Endothelial cell of umbilical vein (primary cell): ENCODE measurements at regions of chr10 and their contacts with region 1.

Region 1: DNA sequence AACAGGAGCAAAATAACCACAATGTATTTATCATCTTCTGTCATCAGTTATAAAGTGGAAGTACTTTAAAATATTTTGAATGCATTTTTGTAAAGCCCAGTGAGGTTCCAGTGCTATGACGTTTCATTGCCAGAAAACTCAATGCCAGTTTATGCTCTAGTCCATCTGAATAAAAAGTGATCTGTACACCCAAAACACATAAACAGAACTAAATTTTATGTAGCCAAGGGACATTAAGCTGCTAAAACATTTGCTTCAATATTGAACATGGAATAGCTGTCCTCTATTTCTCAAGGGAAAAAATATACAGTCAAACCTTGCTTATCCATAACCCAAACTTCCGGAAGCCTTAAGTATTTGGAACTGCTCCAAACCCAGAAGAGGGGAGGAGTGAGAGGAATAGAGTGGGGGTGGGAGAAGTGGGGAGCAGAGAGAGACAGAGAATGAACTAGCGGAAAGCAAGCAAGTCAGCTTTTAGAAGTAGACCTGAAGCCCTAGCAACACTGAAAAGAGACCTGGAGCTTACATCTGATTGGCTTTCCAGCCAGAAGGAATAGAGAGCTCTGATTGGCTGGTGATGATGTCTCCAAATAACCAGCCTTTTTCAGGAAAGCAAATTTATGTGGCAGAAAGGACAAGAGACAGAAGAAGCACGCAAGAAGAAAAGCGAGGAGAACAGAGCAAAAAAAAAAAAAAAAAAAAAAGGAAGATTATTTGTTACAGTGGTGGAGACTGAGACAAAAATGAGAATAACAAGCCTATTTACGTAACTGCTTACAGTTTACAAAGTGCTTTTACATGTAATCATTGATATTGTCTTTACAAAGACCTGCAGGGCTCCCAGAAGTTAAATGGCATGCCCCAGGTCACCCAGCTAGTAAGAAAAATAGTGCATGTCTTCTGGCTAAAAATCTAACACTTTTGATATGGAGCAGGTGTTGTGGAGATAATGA is 196.0 kb downstream of the RNLS start:
- DNase-seq: peak; percentile 88
- H3K4me3 ChIP-seq: peak overlapping the region in 1 of 3 experiments; percentile 12
- H3K27ac ChIP-seq: no peak overlapping the region
- H3K4me1 ChIP-seq: peaks cover 6% of the 10 kb centered on the region
- H3K27me3 ChIP-seq: no peaks in the 10 kb centered on the region
- CTCF ChIP-seq: no peak
- POLR2A ChIP-seq: no peak

Region 2: GRCh38 chr10:87817609-87818504 is 569.2 kb before region 1 on chr10 and contains the start of gene ATAD1:
- CTCF ChIA-PET with region 1: interaction called, 6 read pairs
- POLR2A ChIA-PET with region 1: no interaction called
- dilution Hi-C with region 1: no loop called
- intact Hi-C with region 1: loop called (anchors 1 kb)
- DNase-seq: peak; percentile 80
- H3K4me3 ChIP-seq: peak within 1 kb of the TSS; percentile 61 to 88 (median 78)
- H3K27ac ChIP-seq: peak within 1 kb of the TSS; percentile 68
- H3K4me1 ChIP-seq: peaks cover 22% of the 10 kb centered on the region
- H3K27me3 ChIP-seq: no peaks in the 10 kb centered on the region
- CTCF ChIP-seq: peak in 1 of 2 donors; percentile 5
- POLR2A ChIP-seq: peak; percentile 77
- total RNA-seq, gene ATAD1: 23.6 and 25.8 TPM in 2 replicates

Region 3: GRCh38 chr10:87915989-87916388 is 471.1 kb before region 1 on chr10:
- CTCF ChIA-PET with region 1: interaction called, 10 read pairs
- POLR2A ChIA-PET with region 1: no interaction called
- dilution Hi-C with region 1: no loop called
- intact Hi-C with region 1: loop called (anchors 5 kb)
- DNase-seq: peak; percentile 94
- H3K4me3 ChIP-seq: peak overlapping the region in 1 of 3 experiments; percentile 5
- H3K27ac ChIP-seq: peak overlapping the region; percentile 68
- H3K4me1 ChIP-seq: peaks cover 57% of the 10 kb centered on the region
- H3K27me3 ChIP-seq: no peaks in the 10 kb centered on the region
- CTCF ChIP-seq: no peak
- POLR2A ChIP-seq: no peak

Region 4: DNA sequence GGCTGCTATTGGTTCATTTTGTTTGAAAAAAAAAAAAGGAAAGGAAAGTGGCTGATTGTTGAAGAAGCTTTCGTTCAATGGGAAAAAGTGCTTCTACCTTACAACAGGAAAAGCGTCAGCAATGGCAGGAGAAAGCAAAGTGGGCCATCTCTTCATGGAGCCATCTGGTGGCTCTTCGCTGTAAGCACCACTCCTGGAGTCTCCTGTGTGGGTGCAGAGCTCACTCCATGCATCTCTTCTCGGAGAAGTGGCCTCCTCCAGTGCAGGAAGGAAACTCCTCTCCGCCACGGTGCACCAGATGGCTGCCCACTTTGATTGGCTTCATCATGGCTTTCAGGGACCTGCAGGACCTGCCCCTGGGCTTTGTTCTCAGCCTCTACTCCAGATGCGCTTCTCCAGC is 272.7 kb before region 1 on chr10:
- CTCF ChIA-PET with region 1: interaction called, 42 read pairs
- POLR2A ChIA-PET with region 1: no interaction called
- dilution Hi-C with region 1: no loop called
- intact Hi-C with region 1: loop called (anchors 1 kb)
- DNase-seq: peak; percentile 51
- H3K4me3 ChIP-seq: no peak overlapping the region
- H3K27ac ChIP-seq: no peak overlapping the region
- H3K4me1 ChIP-seq: no peaks in the 10 kb centered on the region
- H3K27me3 ChIP-seq: no peaks in the 10 kb centered on the region
- CTCF ChIP-seq: peak; percentile 42 to 71
- POLR2A ChIP-seq: no peak

Region 5: GRCh38 chr10:88401671-88402347 is 14.7 kb after region 1 on chr10:
- CTCF ChIA-PET with region 1: interaction called, 35 read pairs
- POLR2A ChIA-PET with region 1: no interaction called
- dilution Hi-C with region 1: no loop called
- intact Hi-C with region 1: no loop called
- DNase-seq: peak; percentile 16
- H3K4me3 ChIP-seq: no peak overlapping the region
- H3K27ac ChIP-seq: no peak overlapping the region
- H3K4me1 ChIP-seq: no peaks in the 10 kb centered on the region
- H3K27me3 ChIP-seq: no peaks in the 10 kb centered on the region
- CTCF ChIP-seq: peak in 1 of 2 donors; percentile 17
- POLR2A ChIP-seq: no peak

Region 6: DNA sequence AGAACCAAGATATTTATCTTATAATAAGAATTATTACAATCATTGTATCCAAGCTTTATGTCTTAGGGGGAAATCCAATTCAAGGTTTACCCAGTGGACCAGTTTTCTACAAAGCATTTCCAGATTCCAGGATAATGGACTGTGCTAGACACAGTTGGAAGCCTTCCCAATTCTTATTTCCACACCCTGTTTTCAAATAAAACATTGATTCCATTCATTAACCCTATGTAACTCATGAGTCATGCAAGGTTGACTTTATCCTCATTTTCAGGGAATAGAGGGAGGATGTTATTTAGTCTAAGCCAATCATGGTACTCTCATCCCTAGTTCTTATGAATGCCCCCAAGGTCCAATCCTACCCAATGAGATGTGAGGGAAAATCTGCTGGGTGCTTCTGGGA is 50.3 kb after region 1 on chr10:
- CTCF ChIA-PET with region 1: no interaction called
- POLR2A ChIA-PET with region 1: no interaction called
- dilution Hi-C with region 1: no loop called
- intact Hi-C with region 1: no loop called
- DNase-seq: no peak
- H3K4me3 ChIP-seq: no peak overlapping the region
- H3K27ac ChIP-seq: no peak overlapping the region
- H3K4me1 ChIP-seq: no peaks in the 10 kb centered on the region
- H3K27me3 ChIP-seq: no peaks in the 10 kb centered on the region
- CTCF ChIP-seq: no peak
- POLR2A ChIP-seq: no peak

Region 7: DNA sequence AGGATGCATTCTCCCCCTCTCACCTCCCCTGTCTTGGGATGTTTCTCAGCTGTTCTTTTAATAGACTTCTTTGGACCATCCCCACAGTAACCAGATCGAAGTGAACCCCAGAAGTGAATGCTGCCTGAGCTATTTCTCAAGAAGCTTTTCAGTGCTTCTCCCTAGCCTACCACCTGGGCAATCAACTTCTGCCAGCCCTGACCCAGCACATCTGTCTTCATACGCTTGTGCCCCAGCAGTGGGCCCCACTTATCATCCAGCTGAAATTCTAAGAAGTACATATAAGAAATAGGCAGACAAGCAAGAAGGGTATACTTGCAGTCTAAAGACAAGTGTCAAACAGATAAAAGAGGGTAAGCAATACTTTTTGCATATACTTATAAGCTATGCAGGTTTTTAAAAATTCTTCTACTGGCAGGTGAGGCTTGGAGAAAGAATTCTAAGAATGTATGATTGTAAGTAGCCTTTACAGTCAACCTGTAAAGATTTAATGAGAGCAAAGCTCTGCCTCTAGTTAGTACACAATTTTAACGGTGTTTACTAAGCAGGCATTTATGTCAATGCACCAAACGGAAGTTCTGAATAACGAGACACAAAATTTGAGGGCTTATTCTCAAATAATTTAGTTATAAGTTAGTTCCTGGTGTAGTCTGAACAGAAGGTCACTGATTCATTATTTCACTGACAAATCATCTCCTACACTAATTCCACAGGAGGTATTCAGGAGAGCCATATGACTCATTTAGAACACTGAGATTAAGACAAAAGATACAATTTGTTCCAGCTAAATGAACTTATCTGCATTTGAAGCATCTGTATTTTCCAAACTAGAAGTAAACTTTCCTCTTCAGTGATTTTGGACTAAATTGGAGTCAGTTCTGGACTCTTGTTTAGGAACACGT is 112.7 kb after region 1 on chr10:
- CTCF ChIA-PET with region 1: no interaction called
- POLR2A ChIA-PET with region 1: no interaction called
- dilution Hi-C with region 1: no loop called
- intact Hi-C with region 1: no loop called
- DNase-seq: peak; percentile 3
- H3K4me3 ChIP-seq: no peak overlapping the region
- H3K27ac ChIP-seq: no peak overlapping the region
- H3K4me1 ChIP-seq: peaks cover 4% of the 10 kb centered on the region
- H3K27me3 ChIP-seq: no peaks in the 10 kb centered on the region
- CTCF ChIP-seq: no peak
- POLR2A ChIP-seq: no peak

Region 8: GRCh38 chr10:88522715-88523114 is 135.6 kb after region 1 on chr10:
- CTCF ChIA-PET with region 1: no interaction called
- POLR2A ChIA-PET with region 1: no interaction called
- dilution Hi-C with region 1: no loop called
- intact Hi-C with region 1: no loop called
- DNase-seq: no peak
- H3K4me3 ChIP-seq: no peak overlapping the region
- H3K27ac ChIP-seq: no peak overlapping the region
- H3K4me1 ChIP-seq: peaks cover 8% of the 10 kb centered on the region
- H3K27me3 ChIP-seq: no peaks in the 10 kb centered on the region
- CTCF ChIP-seq: no peak
- POLR2A ChIP-seq: no peak

Region 9: GRCh38 chr10:88651101-88651551 is 264.0 kb after region 1 on chr10:
- CTCF ChIA-PET with region 1: no interaction called
- POLR2A ChIA-PET with region 1: no interaction called
- dilution Hi-C with region 1: no loop called
- intact Hi-C with region 1: no loop called
- DNase-seq: peak; percentile 82
- H3K4me3 ChIP-seq: no peak overlapping the region
- H3K27ac ChIP-seq: peak overlapping the region; percentile 76
- H3K4me1 ChIP-seq: peaks cover 30% of the 10 kb centered on the region
- H3K27me3 ChIP-seq: no peaks in the 10 kb centered on the region
- CTCF ChIP-seq: no peak
- POLR2A ChIP-seq: peak; percentile 21